ENCODE measurements at regions of chr3 and their contacts with region 1.

Region 1: GRCh38 chr3:69699183-69699582 is 40.1 kb upstream of the MITF start:
- DNase-seq: no peak
- ATAC-seq: no peak
- H3K4me3 ChIP-seq: no peak overlapping the region
- H3K27ac ChIP-seq: no peak overlapping the region
- H3K4me1 ChIP-seq: peaks cover 0 to 8% of the 10 kb centered on the region in 2 donors
- H3K27me3 ChIP-seq: no peaks in the 10 kb centered on the region
- CTCF ChIP-seq: no peak
- POLR2A ChIP-seq: no peak

Region 2: GRCh38 chr3:69649120-69650065 is 49.8 kb before region 1 on chr3:
- in situ Hi-C with region 1: no loop called
- intact Hi-C with region 1: loop called (anchors 2 kb)
- DNase-seq: no peak
- ATAC-seq: no peak
- H3K4me3 ChIP-seq: no peak overlapping the region
- H3K27ac ChIP-seq: no peak overlapping the region
- H3K4me1 ChIP-seq: no peaks in the 10 kb centered on the region
- H3K27me3 ChIP-seq: peaks cover 0 to 6% (median 0%) of the 10 kb centered on the region in 3 donors
- CTCF ChIP-seq: no peak
- POLR2A ChIP-seq: no peak

Measured in gastrocnemius medialis (tissue), 4 donors.